Gastrocnemius medialis (tissue), 4 donors: ENCODE measurements at regions of chr12 and their contacts with region 1.

Region 1: DNA sequence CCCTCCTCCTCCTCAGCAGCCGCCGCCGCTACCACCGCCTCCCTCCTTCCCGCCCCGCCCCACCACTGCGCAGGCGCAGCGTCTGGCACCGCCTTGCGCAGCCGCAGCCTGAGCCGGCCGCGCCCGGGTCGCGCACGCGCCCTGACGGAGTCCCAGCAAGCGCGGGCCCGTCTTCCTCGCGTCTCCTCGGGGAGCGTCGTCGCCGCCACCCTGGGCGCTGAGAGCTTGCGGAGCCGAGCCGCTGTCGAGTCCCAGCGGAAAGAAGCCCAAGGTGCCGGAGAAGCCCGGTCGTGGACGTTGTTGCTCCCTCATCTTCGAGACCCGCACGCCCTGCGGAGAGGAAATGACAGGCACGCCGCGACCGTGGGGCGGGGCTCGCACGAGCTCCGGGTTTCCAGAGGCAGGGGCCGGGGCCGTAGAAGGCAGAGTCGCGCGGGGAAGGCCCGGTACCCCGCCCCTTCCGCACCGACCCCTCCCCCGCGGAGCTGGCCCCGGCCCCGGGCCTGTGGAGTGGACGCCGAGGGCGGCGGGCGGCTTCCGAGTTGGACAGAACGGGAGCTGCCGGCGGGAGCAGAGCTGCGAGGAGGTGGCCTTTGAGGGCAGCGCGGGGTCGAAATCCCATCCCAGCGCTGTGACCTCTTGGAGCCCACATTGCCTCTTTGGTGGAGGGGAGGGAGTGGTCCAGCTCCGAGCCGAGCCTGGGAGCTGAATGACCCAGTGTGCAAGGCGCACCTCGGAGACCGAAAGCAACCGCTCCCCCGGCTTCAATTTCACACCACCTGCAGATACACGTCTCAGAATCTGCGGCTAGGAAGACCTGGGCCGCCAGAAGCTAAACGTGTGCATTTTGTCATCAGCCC is 469 bp upstream of the RAB35 start:
- DNase-seq: peak; percentile 90 to 92
- ATAC-seq: peak; percentile 88 to 91
- H3K4me3 ChIP-seq: peak overlapping the region; percentile 69 to 99 (median 86)
- H3K27ac ChIP-seq: peak overlapping the region; percentile 89 to 99 (median 98)
- H3K4me1 ChIP-seq: peaks cover 42 to 49% of the 10 kb centered on the region in 2 donors
- H3K27me3 ChIP-seq: no peaks in the 10 kb centered on the region
- CTCF ChIP-seq: no peak
- POLR2A ChIP-seq: peak; percentile 90 to 93

Region 2: DNA sequence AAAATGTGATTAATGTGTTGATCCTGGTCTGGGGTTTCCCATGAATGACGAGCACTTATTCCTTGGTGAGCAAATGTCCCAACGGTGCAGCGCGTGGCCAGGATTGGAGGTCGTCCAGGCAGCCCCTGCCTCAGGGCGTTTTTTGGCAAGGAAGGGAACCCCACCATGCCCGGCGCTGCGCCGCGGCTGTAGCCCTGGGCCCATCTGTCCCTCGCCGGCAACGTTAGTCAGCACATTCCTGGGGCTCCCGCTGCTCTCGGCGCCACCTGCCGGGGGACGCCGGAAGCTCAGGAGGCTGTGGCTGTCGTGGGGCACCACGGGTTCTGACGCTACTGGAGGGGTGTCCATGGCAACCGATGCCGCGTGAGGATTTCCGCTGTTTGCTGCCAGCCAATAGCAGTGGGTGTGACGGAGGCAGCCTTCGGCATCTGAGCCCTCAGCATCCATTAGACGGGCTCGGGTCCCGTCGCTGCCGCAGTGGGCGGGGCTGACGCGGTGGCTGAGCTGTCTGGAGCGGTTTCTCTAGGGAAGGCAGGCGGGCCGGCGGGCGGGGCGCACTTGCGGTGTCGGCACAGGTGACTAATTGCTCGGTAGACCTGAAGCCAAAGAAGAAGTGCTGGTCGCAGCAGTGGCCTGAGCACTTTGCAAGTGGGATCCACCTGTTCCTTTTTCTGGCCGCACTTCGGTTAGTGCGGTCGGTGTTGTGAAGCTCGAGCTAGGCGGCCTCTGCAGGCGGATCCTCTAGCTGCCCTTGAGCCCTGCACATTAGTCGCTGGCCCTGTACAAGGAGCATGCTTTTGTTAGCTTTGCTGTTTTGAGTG is 30.0 kb before region 1 on chr12:
- in situ Hi-C with region 1: no loop called
- intact Hi-C with region 1: loop called (anchors 1 kb)
- DNase-seq: peak; percentile 98 to 99
- ATAC-seq: peak; percentile 91 to 93
- H3K4me3 ChIP-seq: peak overlapping the region; percentile 39 to 60 (median 50)
- H3K27ac ChIP-seq: peak overlapping the region; percentile 74 to 90 (median 84)
- H3K4me1 ChIP-seq: peaks cover 29 to 31% of the 10 kb centered on the region in 2 donors
- H3K27me3 ChIP-seq: no peaks in the 10 kb centered on the region
- CTCF ChIP-seq: peak; percentile 96 to 99 (median 99)
- POLR2A ChIP-seq: peak in 1 of 2 donors; percentile 63

Region 3: DNA sequence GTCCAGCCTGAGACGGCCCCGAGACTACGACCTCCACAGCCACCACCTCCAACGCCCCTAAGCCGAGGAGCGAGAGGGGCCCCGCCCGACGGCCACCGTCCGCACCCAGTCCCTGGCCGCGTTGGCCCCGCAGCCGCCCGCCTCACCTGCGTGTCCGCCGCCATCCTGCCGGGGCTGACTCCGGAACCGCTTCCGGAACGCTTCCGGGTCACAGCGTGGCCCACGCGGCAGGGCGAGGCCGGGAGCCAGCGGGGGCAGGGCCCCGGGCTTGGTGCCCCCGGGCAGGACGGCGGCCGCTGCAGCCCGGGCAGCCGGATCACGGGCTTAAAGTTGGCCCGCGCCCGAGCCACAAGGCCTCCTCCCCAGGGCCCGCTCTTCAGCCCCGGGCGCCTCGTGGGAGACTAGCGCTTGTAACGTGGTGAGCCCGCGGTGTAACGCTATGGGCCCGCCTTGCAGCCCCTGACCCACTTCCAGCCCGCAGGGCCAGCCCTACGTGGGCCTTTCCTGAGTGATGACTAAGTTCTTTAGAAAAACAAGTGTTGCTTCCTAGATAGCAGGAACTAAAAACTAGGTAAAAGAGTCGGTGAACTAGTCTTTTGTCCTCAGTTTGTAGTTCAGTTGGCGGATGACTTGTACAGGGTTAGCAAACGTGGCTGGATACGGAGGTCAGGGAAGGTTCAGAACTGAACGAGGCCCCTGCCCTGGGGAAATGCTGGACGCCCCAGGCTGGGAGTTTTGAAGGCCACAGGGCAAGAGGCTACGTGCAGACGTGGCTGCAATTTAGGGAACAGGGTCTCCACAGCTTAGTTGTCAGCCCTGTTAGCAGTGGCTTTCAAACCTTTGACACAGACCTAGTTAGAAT is 77.7 kb after region 1 on chr12 and contains the start of gene GCN1:
- in situ Hi-C with region 1: no loop called
- intact Hi-C with region 1: loop called (anchors 5 kb)
- DNase-seq: peak; percentile 66 to 84
- ATAC-seq: peak; percentile 84 to 89
- H3K4me3 ChIP-seq: peak within 1 kb of the TSS; percentile 81 to 94 (median 92)
- H3K27ac ChIP-seq: peak within 1 kb of the TSS; percentile 92 to 97 (median 96)
- H3K4me1 ChIP-seq: peaks cover 30 to 40% of the 10 kb centered on the region in 2 donors
- H3K27me3 ChIP-seq: no peaks in the 10 kb centered on the region
- CTCF ChIP-seq: no peak
- POLR2A ChIP-seq: peak; percentile 90 to 97
- total RNA-seq, gene GCN1: 58.2 to 99.7 (median 87.4) TPM